Heart left ventricle (tissue), 16 donors: ENCODE measurements at regions of chr1 and their contacts with region 1.

Region 1: GRCh38 chr1:64553281-64553680 is 83.4 kb downstream of the CACHD1 start:
- DNase-seq: no peak
- ATAC-seq: no peak
- H3K4me3 ChIP-seq: no peak overlapping the region
- H3K27ac ChIP-seq: no peak overlapping the region
- H3K4me1 ChIP-seq: peaks cover 0 to 23% (median 0%) of the 10 kb centered on the region in 12 donors
- H3K27me3 ChIP-seq: no peaks in the 10 kb centered on the region
- CTCF ChIP-seq: peak in 6 of 12 donors; percentile 19 to 43 (median 24)
- POLR2A ChIP-seq: no peak

Region 2: GRCh38 chr1:64223329-64224151 is 329.7 kb before region 1 on chr1:
- intact Hi-C with region 1: no loop called
- DNase-seq: no peak
- ATAC-seq: no peak
- H3K4me3 ChIP-seq: no peak overlapping the region
- H3K27ac ChIP-seq: peak overlapping the region in 1 of 12 donors; percentile 13
- H3K4me1 ChIP-seq: no peaks in the 10 kb centered on the region
- H3K27me3 ChIP-seq: no peaks in the 10 kb centered on the region
- CTCF ChIP-seq: no peak
- POLR2A ChIP-seq: no peak

Region 3: DNA sequence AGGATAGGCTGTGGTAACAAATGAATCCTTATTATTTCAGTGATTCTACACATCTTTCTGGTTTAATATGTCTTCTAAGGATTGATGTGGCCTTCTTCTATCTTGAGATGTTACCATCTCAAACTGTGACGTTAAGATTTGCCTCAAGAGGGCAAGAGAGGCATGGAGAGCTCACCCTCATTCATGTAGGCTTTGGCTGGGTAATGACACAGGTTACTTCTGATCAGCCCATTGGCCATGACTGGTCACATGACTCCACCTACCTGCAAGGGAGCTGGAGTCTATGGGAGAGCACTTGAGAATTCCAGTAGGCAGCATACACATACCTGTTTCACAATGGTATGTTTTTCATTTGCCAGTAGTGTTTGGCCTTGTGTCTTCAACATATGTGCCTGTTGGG is 53.3 kb before region 1 on chr1:
- intact Hi-C with region 1: loop called in 1 of 10 experiments (anchors 5 kb)
- DNase-seq: no peak
- ATAC-seq: no peak
- H3K4me3 ChIP-seq: no peak overlapping the region
- H3K27ac ChIP-seq: no peak overlapping the region
- H3K4me1 ChIP-seq: peaks cover 0 to 54% (median 15%) of the 10 kb centered on the region in 12 donors
- H3K27me3 ChIP-seq: no peaks in the 10 kb centered on the region
- CTCF ChIP-seq: no peak
- POLR2A ChIP-seq: no peak